Endothelial cell of umbilical vein (primary cell): ENCODE measurements at regions of chr3 and their contacts with region 1.

Region 1: DNA sequence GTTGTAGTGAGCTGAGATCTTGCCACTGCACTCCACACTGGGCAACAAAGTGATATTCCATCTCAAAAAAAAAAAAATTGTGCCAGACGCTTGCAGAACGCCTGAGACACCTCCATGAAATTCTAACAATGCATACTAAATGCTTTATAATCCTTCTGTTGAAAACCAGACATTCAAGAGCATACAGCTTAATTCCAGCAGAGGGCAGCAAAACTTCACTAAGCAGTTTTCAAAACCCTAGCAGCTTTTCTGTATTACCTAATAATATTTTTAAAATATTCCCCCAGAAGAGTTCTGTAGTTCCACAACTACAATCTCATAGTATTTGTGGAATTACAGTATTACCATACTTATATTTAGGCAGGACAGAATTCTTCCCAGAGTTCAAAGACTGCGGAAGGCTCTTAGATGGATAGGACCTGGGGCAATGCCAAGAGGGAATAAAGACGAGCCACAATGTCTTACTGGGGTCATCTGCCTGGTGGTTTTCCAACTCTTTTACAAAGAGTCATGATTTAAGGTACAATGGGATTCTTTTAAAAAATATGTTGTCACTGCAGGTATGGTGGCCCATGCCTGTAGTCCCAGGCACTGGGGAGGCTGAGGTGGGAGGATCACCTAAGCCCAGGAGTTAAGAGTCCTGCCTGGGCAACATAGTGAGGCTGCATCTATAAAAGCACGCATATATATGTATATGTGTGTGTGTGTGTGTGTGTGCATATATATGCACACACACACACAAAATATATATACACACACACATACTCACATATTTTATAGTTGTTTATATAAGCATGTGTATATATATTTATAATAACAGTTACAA is 19.6 kb upstream of the TASOR start:
- DNase-seq: peak; percentile 66
- H3K4me3 ChIP-seq: no peak overlapping the region
- H3K27ac ChIP-seq: no peak overlapping the region
- H3K4me1 ChIP-seq: no peaks in the 10 kb centered on the region
- H3K27me3 ChIP-seq: no peaks in the 10 kb centered on the region
- CTCF ChIP-seq: peak; percentile 56 to 61
- POLR2A ChIP-seq: no peak

Region 2: DNA sequence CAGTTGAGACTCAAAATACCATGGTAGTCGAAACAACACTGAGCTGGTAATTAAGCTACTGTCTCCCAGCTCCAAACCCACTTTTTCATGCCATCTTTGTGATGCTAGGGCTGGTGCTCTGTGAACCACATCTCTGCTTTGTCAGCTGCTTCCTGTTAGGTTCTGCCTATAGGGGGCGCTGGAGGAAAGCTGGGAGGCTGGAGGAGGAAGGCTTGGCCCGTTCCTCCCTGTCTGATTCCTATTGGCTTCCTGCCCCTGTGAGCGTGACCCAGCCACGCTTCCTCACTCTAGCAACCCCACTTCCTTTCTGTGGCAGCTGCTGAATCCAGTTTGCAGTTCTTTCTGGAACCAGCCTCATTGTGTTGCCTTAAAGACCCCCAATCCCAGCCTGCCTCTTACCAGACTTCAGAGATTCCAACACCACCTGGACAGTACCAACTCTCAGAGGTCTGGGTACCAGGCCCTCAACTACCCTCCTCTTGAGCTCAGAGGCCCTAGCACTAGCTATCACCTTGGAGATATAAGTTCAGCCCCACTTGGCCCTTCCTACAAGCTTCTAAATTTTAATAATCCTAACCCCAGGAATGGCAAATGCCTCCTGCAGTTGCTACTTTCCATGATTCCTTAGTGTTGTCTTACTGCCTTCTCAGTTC is 355.4 kb before region 1 on chr3:
- CTCF ChIA-PET with region 1: no interaction called
- POLR2A ChIA-PET with region 1: no interaction called
- dilution Hi-C with region 1: no loop called
- intact Hi-C with region 1: no loop called
- DNase-seq: peak; percentile 24
- H3K4me3 ChIP-seq: no peak overlapping the region
- H3K27ac ChIP-seq: no peak overlapping the region
- H3K4me1 ChIP-seq: no peaks in the 10 kb centered on the region
- H3K27me3 ChIP-seq: no peaks in the 10 kb centered on the region
- CTCF ChIP-seq: peak; percentile 42 to 52
- POLR2A ChIP-seq: no peak

Region 3: GRCh38 chr3:56855856-56856512 is 153.3 kb after region 1 on chr3:
- CTCF ChIA-PET with region 1: interaction called, 4 read pairs
- POLR2A ChIA-PET with region 1: no interaction called
- dilution Hi-C with region 1: no loop called
- intact Hi-C with region 1: loop called (anchors 2 kb)
- DNase-seq: peak; percentile 67
- H3K4me3 ChIP-seq: no peak overlapping the region
- H3K27ac ChIP-seq: no peak overlapping the region
- H3K4me1 ChIP-seq: peaks cover 8% of the 10 kb centered on the region
- H3K27me3 ChIP-seq: no peaks in the 10 kb centered on the region
- CTCF ChIP-seq: peak; percentile 87 to 89
- POLR2A ChIP-seq: no peak

Region 4: DNA sequence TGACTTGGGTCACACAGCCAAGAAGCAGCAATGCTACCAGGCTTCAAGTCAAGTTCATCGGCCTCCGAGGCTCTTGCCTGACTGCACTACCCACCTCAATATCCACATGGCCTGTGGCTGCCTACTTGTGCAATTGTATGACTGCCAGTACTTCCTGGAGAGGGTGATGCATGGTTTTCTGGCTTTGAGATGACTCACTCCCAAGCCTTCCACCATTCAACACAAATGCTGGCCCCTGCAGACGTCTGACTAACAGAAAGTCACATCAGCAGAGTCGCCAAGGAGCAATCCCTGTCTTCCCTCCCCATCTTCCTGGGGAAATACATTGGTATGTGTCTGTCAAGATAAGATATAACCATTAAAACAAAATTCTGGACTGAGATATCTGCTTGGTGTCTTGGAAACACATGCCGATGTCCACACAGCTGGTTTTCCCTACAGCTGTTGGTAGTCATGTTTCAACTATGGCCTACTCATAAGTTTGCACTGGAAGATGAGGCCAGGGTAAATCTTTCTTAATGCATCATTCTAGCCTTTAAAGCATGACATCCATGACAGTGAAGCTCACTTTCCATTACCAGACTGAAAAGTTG is 278.2 kb after region 1 on chr3:
- CTCF ChIA-PET with region 1: interaction called, 109 read pairs
- POLR2A ChIA-PET with region 1: no interaction called
- dilution Hi-C with region 1: no loop called
- intact Hi-C with region 1: no loop called
- DNase-seq: peak; percentile 95
- H3K4me3 ChIP-seq: no peak overlapping the region
- H3K27ac ChIP-seq: peak overlapping the region; percentile 65
- H3K4me1 ChIP-seq: peaks cover 23% of the 10 kb centered on the region
- H3K27me3 ChIP-seq: no peaks in the 10 kb centered on the region
- CTCF ChIP-seq: no peak
- POLR2A ChIP-seq: no peak